ENCODE measurements at regions of chr17 and their contacts with region 1.

Region 1: GRCh38 chr17:77404812-77405581 is 264.2 kb downstream of the SEC14L1 start:
- DNase-seq: peak; percentile 60
- ATAC-seq: peak; percentile 70
- H3K4me3 Mint-ChIP-seq: peak overlapping the region; percentile 89
- H3K27ac Mint-ChIP-seq: peak overlapping the region; percentile 96
- H3K4me1 Mint-ChIP-seq: peaks cover 94% of the 10 kb centered on the region
- H3K27me3 Mint-ChIP-seq: no peaks in the 10 kb centered on the region
- CTCF ChIP-seq: no peak

Region 2: DNA sequence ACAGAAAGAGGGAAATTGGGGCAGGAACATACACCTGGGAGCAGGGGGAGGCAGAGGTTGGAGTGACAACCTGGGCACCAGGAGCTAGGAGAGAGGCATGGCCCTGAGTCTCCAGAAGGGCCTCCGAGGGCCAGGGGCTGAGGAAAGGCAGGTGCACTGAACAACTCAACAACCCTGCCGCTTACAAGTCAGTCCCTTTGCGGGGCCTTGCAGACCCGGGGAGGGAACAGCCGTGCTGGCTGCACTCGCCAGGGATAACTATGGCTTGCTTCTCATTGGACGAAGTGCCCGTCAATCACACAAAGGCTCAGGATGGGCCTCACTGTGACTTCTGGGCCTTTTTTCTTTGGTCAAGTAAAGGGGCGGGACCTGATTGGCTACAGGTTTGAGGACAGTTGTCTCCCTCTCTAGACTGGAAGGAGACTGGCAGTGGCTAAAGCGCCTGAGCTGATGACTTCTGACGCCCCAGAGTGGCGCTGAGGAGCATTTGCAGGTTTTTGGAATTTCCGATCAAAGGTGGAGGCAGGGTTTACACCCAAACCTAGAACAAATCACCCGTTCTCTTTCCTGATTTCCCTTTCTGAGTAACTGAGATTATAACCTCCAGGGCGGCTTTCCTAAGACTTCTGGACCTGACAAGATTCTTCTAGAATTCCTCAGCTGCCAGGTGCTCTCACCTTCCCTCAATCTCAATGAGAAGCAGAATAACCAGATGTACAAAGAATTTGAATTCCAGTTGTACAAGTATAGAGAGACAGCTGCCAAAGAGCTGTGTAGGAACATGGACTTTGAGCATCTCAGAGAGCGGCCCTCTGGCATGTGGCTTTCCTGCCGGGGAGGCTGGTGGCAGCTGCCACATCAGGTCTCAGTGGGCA is 791.8 kb before region 1 on chr17:
- CTCF ChIA-PET with region 1: no interaction called
- POLR2A ChIA-PET with region 1: no interaction called
- intact Hi-C with region 1: no loop called
- DNase-seq: no peak
- ATAC-seq: no peak
- H3K4me3 Mint-ChIP-seq: no peak overlapping the region
- H3K27ac Mint-ChIP-seq: no peak overlapping the region
- H3K4me1 Mint-ChIP-seq: peaks cover 4% of the 10 kb centered on the region
- H3K27me3 Mint-ChIP-seq: peaks cover 8% of the 10 kb centered on the region
- CTCF ChIP-seq: no peak

Region 3: DNA sequence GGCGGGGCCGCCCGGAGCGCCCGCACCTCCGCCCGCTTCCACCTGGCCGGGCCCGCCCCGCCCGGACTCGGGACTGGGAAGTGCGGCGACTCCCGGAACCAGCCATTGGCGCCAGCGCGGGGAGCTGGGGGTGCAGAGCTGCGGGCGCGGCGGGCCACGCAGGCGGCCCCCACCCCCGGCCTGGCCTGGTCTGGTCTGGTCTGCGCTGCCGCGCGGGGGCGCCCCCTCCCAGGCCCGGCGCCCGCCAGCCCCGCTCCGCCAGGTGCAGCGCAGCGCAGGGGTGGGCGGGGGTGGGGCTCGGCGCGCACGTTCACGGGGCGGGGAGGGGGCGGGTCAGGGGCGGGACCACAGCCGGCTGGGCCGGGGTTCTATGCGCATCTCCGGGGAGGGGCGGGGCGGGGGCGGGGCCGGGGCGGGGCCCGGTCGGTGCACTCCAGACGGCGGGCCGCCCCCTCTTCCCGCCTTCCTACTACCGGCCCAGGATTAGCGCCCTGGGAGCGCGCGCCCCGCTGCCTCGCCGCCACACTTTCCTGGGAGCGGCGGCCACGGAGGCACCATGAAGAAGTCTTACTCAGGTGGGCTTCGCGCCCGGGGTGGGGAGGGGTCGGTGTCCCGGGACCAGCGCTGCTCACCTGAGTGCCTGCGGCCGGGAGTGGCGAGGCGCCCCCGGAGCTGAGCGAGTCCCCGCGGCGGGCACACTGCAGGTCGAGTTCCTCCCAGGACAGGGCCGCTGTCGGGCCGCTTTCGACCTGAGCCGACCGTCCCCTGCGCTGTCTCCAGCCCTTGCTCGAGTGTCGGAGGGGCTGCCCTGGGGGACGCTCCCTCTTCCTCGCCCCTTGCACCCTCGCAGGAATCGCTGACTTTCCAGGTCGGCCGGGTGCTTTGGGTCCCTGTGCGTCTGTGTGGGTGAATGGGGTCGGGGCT is 123.8 kb before region 1 on chr17:
- CTCF ChIA-PET with region 1: interaction called, 4 read pairs
- POLR2A ChIA-PET with region 1: no interaction called
- intact Hi-C with region 1: loop called (anchors 5 kb)
- DNase-seq: peak; percentile 74
- ATAC-seq: peak; percentile 93
- H3K4me3 Mint-ChIP-seq: peak overlapping the region; percentile 82
- H3K27ac Mint-ChIP-seq: peak overlapping the region; percentile 85
- H3K4me1 Mint-ChIP-seq: peaks cover 30% of the 10 kb centered on the region
- H3K27me3 Mint-ChIP-seq: peaks cover 4% of the 10 kb centered on the region
- CTCF ChIP-seq: no peak

Region 4: DNA sequence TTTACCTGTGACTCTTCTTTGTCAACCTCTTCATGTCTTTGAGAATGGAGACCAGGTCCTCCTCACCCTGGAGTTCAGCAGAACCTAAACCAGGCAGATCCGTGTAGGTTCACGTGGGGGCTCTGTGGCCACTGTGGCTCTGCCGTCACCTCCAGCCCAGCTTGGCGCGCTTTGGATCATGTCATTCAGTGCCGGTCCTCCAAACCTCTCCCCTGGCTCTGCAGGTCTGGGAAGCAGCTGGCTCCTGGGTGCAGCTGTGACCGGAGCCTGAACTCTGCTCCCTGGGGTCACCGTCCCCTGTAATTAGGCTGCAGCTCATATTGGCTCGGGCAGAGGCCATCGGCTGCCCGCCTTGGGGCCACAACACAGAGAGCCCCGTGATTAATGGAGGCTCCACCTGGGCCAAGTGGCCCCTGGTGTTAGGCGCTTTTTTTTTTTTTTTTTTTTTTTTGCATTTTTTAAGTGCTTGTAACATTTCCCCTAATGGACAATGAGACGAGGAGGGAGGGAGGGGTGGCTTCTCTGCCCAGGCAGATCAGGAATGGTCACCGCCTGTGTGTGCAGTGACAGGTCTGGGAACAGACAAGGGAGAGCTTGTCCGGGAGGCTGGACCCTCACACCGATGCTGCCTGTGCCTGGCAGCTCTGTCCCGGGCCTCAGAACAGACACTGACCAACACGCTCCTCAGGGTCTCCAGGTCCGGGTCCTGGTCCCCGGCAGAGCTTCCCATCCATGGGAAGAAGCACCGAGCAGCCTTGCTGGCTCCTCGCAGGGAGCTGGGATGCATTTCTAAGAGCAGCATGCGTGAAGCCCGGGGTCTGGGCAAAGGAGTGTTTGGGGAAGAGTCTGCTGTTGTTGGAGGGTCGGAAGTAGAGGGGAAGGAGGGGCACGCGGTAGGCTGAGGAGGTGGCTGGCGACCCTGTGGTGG is 16.3 kb before region 1 on chr17:
- CTCF ChIA-PET with region 1: interaction called, 8 read pairs
- POLR2A ChIA-PET with region 1: interaction called, 30 read pairs
- intact Hi-C with region 1: no loop called
- DNase-seq: no peak
- ATAC-seq: no peak
- H3K4me3 Mint-ChIP-seq: peak overlapping the region; percentile 46
- H3K27ac Mint-ChIP-seq: peak overlapping the region; percentile 80
- H3K4me1 Mint-ChIP-seq: peaks cover 43% of the 10 kb centered on the region
- H3K27me3 Mint-ChIP-seq: no peaks in the 10 kb centered on the region
- CTCF ChIP-seq: no peak

Region 5: DNA sequence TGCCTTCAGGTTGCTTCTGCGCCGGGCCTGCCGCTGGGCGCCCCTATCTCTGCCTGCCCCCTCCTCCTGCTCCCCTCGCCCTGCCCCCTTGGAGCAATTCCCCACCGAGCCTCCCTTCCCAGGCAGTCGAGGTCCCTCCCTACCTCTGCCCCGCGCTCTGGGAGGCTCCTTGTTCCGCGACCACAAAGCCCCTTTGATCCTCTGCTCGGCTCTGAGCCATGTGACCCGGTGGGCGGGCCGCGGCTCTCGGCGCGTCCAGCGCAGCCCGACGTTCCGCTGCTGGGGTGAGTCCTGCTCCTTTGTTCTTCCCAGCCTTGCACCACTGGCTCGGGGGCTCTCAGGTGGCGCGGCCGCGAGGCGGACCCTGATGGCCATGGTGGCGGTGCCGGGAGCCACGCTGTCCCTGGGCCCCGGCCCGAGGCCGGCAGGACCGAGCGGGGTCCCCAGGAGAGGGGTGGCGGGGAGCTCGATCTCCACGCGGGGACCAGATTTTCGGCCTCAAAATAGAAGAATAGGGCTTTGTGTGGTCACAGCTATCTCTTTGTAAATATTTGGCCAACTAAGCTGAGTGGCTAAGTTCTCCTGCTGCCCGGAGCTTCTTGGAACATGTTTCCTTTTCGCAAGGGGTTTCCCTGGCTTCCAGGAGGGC is 46.4 kb after region 1 on chr17:
- CTCF ChIA-PET with region 1: interaction called, 3 read pairs
- POLR2A ChIA-PET with region 1: interaction called, 191 read pairs
- intact Hi-C with region 1: no loop called
- DNase-seq: peak; percentile 65
- ATAC-seq: peak; percentile 59
- H3K4me3 Mint-ChIP-seq: peak overlapping the region; percentile 95
- H3K27ac Mint-ChIP-seq: peak overlapping the region; percentile 99
- H3K4me1 Mint-ChIP-seq: peaks cover 82% of the 10 kb centered on the region
- H3K27me3 Mint-ChIP-seq: no peaks in the 10 kb centered on the region
- CTCF ChIP-seq: no peak

Region 6: DNA sequence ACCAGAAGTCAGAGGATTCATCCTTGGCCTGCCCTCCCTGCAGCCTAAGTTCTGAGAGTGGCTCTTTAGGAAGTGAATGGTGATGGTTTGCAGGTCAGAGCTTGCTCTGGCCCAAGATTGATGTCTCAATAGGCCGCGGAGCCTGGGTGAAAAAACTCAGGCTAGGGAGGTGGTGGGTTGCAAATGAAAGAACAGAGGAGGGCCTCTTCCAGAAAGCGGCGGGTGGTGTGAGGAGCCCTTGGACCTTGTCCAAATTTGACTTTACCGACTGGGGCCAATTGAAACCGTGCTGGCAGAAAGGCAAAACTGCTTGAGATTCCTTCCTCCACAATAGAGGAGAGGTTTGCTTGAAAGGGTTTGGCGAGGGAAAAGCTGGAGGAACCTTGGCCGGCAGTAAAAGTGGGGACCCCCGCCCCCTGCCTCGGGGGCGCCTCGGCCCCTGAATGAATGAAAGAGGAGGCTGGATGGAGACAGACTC is 67.0 kb after region 1 on chr17:
- CTCF ChIA-PET with region 1: interaction called, 3 read pairs
- POLR2A ChIA-PET with region 1: interaction called, 10 read pairs
- intact Hi-C with region 1: no loop called
- DNase-seq: no peak
- ATAC-seq: no peak
- H3K4me3 Mint-ChIP-seq: peak overlapping the region; percentile 72
- H3K27ac Mint-ChIP-seq: peak overlapping the region; percentile 84
- H3K4me1 Mint-ChIP-seq: peaks cover 97% of the 10 kb centered on the region
- H3K27me3 Mint-ChIP-seq: no peaks in the 10 kb centered on the region
- CTCF ChIP-seq: no peak

Region 7: DNA sequence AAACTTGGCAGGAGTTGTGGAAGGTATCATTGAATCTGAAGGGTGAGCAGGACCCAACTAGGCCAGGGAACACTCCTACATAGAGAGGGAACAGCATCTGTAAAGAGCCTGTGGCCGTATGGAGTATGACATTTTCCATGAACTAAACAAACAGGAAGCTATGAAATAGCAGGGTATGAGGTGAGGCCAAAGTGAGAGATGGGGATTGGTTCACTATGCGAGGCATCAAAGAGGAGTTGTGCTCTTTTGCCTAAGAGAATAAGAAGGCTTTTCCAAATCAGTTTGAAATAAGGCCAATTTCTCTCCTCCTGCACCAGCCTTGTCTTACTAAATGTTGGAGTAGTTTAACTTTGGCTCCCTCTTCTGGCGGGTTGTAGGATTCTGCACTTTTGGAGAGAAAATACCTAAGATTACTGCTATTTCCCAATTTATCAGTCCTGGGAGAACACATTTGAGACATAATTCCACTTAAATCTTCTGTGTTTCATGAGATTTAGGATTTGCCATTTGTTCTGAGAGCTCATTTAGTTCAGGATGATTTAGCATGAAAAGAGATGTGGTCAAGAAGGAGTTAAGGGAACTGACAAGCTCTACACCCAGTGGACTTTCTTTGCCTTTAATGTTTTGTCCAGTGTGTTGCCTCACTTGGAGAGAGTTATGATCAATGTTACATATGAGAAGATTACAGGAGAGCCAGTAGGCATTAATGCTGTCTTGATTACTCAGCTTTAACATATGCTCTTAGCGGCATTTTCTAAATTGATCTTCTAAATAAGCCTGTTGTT is 608.9 kb after region 1 on chr17:
- CTCF ChIA-PET with region 1: interaction called, 14 read pairs
- POLR2A ChIA-PET with region 1: no interaction called
- intact Hi-C with region 1: loop called (anchors 10 kb)
- DNase-seq: no peak
- ATAC-seq: peak; percentile 54
- H3K4me3 Mint-ChIP-seq: no peak overlapping the region
- H3K27ac Mint-ChIP-seq: no peak overlapping the region
- H3K4me1 Mint-ChIP-seq: peaks cover 2% of the 10 kb centered on the region
- H3K27me3 Mint-ChIP-seq: no peaks in the 10 kb centered on the region
- CTCF ChIP-seq: peak; percentile 52